GM12878 (cell line): ENCODE measurements at regions of chr3 and their contacts with region 1.

Region 1: DNA sequence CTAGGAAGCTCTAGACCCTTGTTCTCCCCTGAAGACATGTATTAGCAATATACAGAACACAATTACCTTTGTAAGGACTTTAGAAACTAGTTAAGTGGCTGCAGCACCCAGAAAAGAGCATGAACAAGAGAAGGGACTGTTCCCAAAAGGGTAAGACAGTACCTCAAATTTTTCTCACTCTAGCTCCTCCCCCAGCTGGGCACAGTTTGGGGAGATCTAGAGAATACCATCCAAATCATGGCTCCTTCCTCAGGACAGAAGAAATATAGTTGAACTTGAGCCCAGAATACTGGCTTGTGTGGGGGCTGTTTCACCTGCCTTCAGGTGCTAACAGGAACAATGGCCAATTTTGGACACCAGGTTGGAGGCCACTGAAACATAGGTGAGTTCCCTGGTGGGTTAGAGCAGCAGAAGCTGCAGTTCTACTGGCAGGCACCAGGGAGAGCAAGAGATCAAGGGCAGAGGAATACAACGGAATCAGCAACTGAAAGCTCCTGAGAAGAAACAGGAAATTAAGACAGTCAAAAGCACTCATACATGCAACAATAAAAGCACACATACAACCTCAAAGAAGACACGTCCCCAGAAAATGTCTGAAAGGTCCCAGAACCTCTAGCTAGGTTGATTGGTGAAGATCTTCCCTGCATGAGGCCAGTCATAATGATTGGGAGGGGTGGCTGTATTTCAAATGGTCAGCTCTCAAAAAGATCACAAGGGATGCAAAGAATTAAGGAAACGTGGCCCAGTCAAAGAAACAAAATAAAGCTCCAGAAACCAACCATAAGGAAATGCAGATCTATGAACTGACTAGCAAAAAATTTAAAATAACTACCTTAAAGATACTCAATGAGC is 104.9 kb upstream of the ASB14 start:
- DNase-seq: peak; percentile 39
- ATAC-seq: peak; percentile 100
- H3K4me3 ChIP-seq: no peak overlapping the region
- H3K27ac ChIP-seq: no peak overlapping the region
- H3K4me1 ChIP-seq: no peaks in the 10 kb centered on the region
- H3K27me3 ChIP-seq: no peaks in the 10 kb centered on the region
- CTCF ChIP-seq: peak; percentile 87 to 97 (median 97)
- EP300 ChIP-seq: no peak
- POLR2A ChIP-seq: no peak
- RAD21 ChIP-seq: peak; percentile 94

Region 2: GRCh38 chr3:57169872-57170623 is 227.4 kb before region 1 on chr3:
- CTCF ChIA-PET with region 1: interaction called, 21 read pairs
- POLR2A ChIA-PET with region 1: no interaction called
- RAD21 ChIA-PET with region 1: interaction called, 8 read pairs
- SMC1A ChIA-PET with region 1: interaction called, 7 read pairs
- in situ Hi-C with region 1: no loop called
- intact Hi-C with region 1: loop called (anchors 10 kb)
- DNase-seq: no peak
- ATAC-seq: peak; percentile 91
- H3K4me3 ChIP-seq: peak overlapping the region; percentile 75
- H3K27ac ChIP-seq: no peak overlapping the region; the same call in 1 of the 2 replicates
- H3K4me1 ChIP-seq: 0 out of 2 replicates have a peak, but pooled peaks cover 4% of the 10 kb centered on the region
- H3K27me3 ChIP-seq: peaks cover 0 to 4% of the 10 kb centered on the region in 2 experiments; a peak in 2 of 4 replicates
- CTCF ChIP-seq: peak; percentile 78 to 88 (median 84)
- EP300 ChIP-seq: 0 out of 4 replicates have a peak, but pooled peaks of 1 of the 2 experiments have one; percentile 25
- POLR2A ChIP-seq: no peak
- RAD21 ChIP-seq: peak; percentile 79

Region 3: GRCh38 chr3:57309769-57310360 is 87.5 kb before region 1 on chr3:
- CTCF ChIA-PET with region 1: no interaction called
- POLR2A ChIA-PET with region 1: no interaction called
- RAD21 ChIA-PET with region 1: no interaction called
- SMC1A ChIA-PET with region 1: no interaction called
- in situ Hi-C with region 1: no loop called
- intact Hi-C with region 1: no loop called
- DNase-seq: no peak
- ATAC-seq: no peak
- H3K4me3 ChIP-seq: no peak overlapping the region
- H3K27ac ChIP-seq: no peak overlapping the region
- H3K4me1 ChIP-seq: no peaks in the 10 kb centered on the region
- H3K27me3 ChIP-seq: no peaks in the 10 kb centered on the region; a peak in 1 of 4 replicates
- CTCF ChIP-seq: no peak
- EP300 ChIP-seq: no peak
- POLR2A ChIP-seq: no peak
- RAD21 ChIP-seq: no peak

Region 4: DNA sequence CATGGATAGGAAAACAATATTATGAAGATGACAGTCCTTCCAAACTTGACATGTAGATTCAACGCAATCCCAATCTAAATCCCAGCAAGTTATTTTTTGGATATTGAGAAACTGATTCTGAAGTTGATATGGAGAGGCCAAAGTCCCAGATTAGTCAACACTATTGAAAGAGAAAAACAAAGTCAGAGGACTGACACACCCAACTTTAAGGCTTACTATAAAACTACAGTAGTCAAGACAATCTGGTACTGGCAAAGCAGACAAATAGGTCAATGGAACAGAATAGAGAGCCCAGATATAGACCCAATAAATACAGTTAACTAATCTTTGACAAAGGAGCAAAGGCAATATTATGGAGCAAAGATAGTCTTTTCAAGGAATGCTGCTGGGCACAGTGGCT is 14.3 kb after region 1 on chr3:
- CTCF ChIA-PET with region 1: interaction called, 27 read pairs
- POLR2A ChIA-PET with region 1: no interaction called
- RAD21 ChIA-PET with region 1: no interaction called
- SMC1A ChIA-PET with region 1: interaction called, 11 read pairs
- in situ Hi-C with region 1: no loop called
- intact Hi-C with region 1: no loop called
- DNase-seq: no peak
- ATAC-seq: no peak
- H3K4me3 ChIP-seq: no peak overlapping the region
- H3K27ac ChIP-seq: no peak overlapping the region
- H3K4me1 ChIP-seq: no peaks in the 10 kb centered on the region
- H3K27me3 ChIP-seq: peaks cover 0 to 5% of the 10 kb centered on the region in 2 experiments; a peak in 1 of 4 replicates
- CTCF ChIP-seq: no peak
- EP300 ChIP-seq: no peak
- POLR2A ChIP-seq: no peak
- RAD21 ChIP-seq: no peak

Region 5: DNA sequence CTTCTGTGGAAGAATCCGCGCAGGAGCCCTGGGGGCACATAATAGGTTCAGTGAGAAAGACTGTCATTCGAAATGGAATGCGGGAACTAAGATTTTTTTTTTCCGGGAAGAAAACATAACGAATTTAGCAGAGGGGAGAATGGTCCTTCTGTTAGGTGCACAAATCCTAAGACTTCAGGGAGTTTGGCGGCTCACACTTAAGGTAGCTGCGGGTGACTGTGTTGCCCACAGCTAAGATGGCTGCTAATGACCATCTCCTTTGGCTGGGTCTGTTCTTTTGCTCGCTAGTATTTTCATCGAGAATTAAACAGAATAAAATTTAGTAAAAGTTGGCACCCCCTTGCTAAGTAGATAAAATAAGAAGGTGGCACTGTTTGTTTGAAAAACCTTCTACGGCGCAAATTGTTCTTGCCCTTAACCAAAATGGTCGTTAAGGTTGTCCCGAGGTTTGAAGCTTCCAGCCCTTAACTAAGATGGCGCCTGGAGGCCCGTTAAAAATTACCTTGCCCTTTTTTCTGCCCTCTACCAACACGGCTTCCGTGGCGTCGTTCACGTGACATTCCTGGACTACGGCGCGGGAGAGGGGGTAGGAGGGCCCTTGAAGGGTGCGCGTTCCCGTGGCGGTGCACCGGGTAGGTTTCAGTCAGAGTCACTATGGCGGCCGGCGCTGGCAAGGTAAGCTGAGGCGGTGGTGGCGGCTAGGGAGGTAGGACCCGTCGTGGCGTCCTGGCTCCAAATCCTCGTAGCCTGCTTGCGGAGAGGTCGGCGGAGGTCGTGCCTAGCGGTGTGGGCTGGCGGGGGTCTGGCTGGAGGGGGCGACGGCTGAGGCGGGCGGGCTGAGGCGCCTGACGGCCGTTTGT is 358.5 kb after region 1 on chr3 and contains the start of gene SLMAP:
- CTCF ChIA-PET with region 1: no interaction called
- POLR2A ChIA-PET with region 1: no interaction called
- RAD21 ChIA-PET with region 1: interaction called, 5 read pairs
- SMC1A ChIA-PET with region 1: interaction called, 3 read pairs
- in situ Hi-C with region 1: no loop called
- intact Hi-C with region 1: loop called (anchors 5 kb)
- DNase-seq: peak; percentile 90
- ATAC-seq: peak; percentile 95
- H3K4me3 ChIP-seq: peak within 1 kb of the TSS; percentile 77
- H3K27ac ChIP-seq: peak within 1 kb of the TSS; percentile 91
- H3K4me1 ChIP-seq: peaks cover 6% of the 10 kb centered on the region; the same call in 1 of the 2 replicates
- H3K27me3 ChIP-seq: no peaks in the 10 kb centered on the region
- CTCF ChIP-seq: no peak
- EP300 ChIP-seq: 0 out of 4 replicates have a peak, but pooled peaks of 1 of the 2 experiments have one; percentile 30
- POLR2A ChIP-seq: peak; percentile 98
- RAD21 ChIP-seq: no peak
- polyA plus RNA-seq, gene SLMAP: 8.3 to 10.4 TPM

Region 6: GRCh38 chr3:57910988-57911387 is 513.6 kb after region 1 on chr3:
- CTCF ChIA-PET with region 1: interaction called, 34 read pairs
- POLR2A ChIA-PET with region 1: no interaction called
- RAD21 ChIA-PET with region 1: interaction called, 5 read pairs
- SMC1A ChIA-PET with region 1: interaction called, 10 read pairs
- in situ Hi-C with region 1: no loop called
- intact Hi-C with region 1: loop called (anchors 1 kb)
- DNase-seq: no peak
- ATAC-seq: peak; percentile 55; the same call in 1 of the 3 replicates
- H3K4me3 ChIP-seq: no peak overlapping the region
- H3K27ac ChIP-seq: no peak overlapping the region
- H3K4me1 ChIP-seq: no peaks in the 10 kb centered on the region
- H3K27me3 ChIP-seq: no peaks in the 10 kb centered on the region
- CTCF ChIP-seq: peak; percentile 33 to 45 (median 41); a peak in 4 of 6 replicates
- EP300 ChIP-seq: no peak
- POLR2A ChIP-seq: no peak
- RAD21 ChIP-seq: peak; percentile 34